B cell (primary cell): ENCODE measurements at regions of chr22 and their contacts with region 1.

Region 1: GRCh38 chr22:19447388-19448075 is at the start of gene C22orf39:
- DNase-seq: peak; percentile 94
- ATAC-seq: peak; percentile 87
- H3K4me3 ChIP-seq: peak within 1 kb of the TSS; percentile 65 to 82 (median 80)
- H3K4me3 Mint-ChIP-seq: peak within 1 kb of the TSS; percentile 99
- H3K27ac ChIP-seq: peak within 1 kb of the TSS; percentile 92 to 96
- H3K27ac Mint-ChIP-seq: peak within 1 kb of the TSS; percentile 98
- H3K4me1 ChIP-seq: peaks cover 16 to 27% of the 10 kb centered on the region in 2 donors
- H3K4me1 Mint-ChIP-seq: peaks cover 39% of the 10 kb centered on the region
- H3K27me3 ChIP-seq: no peaks in the 10 kb centered on the region
- H3K27me3 Mint-ChIP-seq: no peaks in the 10 kb centered on the region
- CTCF ChIP-seq: no peak
- total RNA-seq, gene C22orf39: 47.2 and 55.1 TPM in 2 replicates

Region 2: GRCh38 chr22:19122143-19122751 is 325.3 kb before region 1 on chr22 and contains the start of gene DGCR2:
- CTCF ChIA-PET with region 1: no interaction called
- POLR2A ChIA-PET with region 1: no interaction called
- intact Hi-C with region 1: loop called (anchors 5 kb)
- DNase-seq: peak; percentile 97
- ATAC-seq: peak; percentile 97
- H3K4me3 ChIP-seq: peak within 1 kb of the TSS; percentile 67 to 93 (median 83)
- H3K4me3 Mint-ChIP-seq: peak within 1 kb of the TSS; percentile 94
- H3K27ac ChIP-seq: peak within 1 kb of the TSS; percentile 63 to 76
- H3K27ac Mint-ChIP-seq: peak within 1 kb of the TSS; percentile 88
- H3K4me1 ChIP-seq: peaks cover 46 to 49% of the 10 kb centered on the region in 2 donors
- H3K4me1 Mint-ChIP-seq: peaks cover 45% of the 10 kb centered on the region
- H3K27me3 ChIP-seq: no peaks in the 10 kb centered on the region
- H3K27me3 Mint-ChIP-seq: no peaks in the 10 kb centered on the region
- CTCF ChIP-seq: no peak
- total RNA-seq, gene DGCR2: 49.5 and 50.4 TPM in 2 replicates

Region 3: GRCh38 chr22:19291580-19292457 is 155.7 kb before region 1 on chr22 and contains the start of gene CLTCL1:
- CTCF ChIA-PET with region 1: interaction called, 3 read pairs
- POLR2A ChIA-PET with region 1: interaction called, 6 read pairs
- intact Hi-C with region 1: loop called (anchors 1 kb)
- DNase-seq: peak; percentile 87
- ATAC-seq: peak; percentile 83
- H3K4me3 ChIP-seq: peak within 1 kb of the TSS; percentile 64 to 88 (median 84)
- H3K4me3 Mint-ChIP-seq: peak within 1 kb of the TSS; percentile 97
- H3K27ac ChIP-seq: peak within 1 kb of the TSS; percentile 75 to 77
- H3K27ac Mint-ChIP-seq: peak within 1 kb of the TSS; percentile 94
- H3K4me1 ChIP-seq: peaks cover 15 to 17% of the 10 kb centered on the region in 2 donors
- H3K4me1 Mint-ChIP-seq: peaks cover 24% of the 10 kb centered on the region
- H3K27me3 ChIP-seq: peaks cover 0 to 13% (median 3%) of the 10 kb centered on the region in 4 experiments
- H3K27me3 Mint-ChIP-seq: peaks cover 18% of the 10 kb centered on the region
- CTCF ChIP-seq: no peak
- total RNA-seq, gene CLTCL1: 5.2 and 5.5 TPM in 2 replicates

Region 4: GRCh38 chr22:19361501-19362103 is 85.9 kb before region 1 on chr22:
- CTCF ChIA-PET with region 1: no interaction called
- POLR2A ChIA-PET with region 1: interaction called, 3 read pairs
- intact Hi-C with region 1: loop called (anchors 1 kb)
- DNase-seq: peak; percentile 92
- ATAC-seq: peak; percentile 95
- H3K4me3 ChIP-seq: peak overlapping the region; percentile 1 to 65 (median 47)
- H3K4me3 Mint-ChIP-seq: peak overlapping the region; percentile 85
- H3K27ac ChIP-seq: peak overlapping the region; percentile 98 to 100
- H3K27ac Mint-ChIP-seq: peak overlapping the region; percentile 95
- H3K4me1 ChIP-seq: peaks cover 64 to 75% of the 10 kb centered on the region in 2 donors
- H3K4me1 Mint-ChIP-seq: peaks cover 69% of the 10 kb centered on the region
- H3K27me3 ChIP-seq: no peaks in the 10 kb centered on the region
- H3K27me3 Mint-ChIP-seq: no peaks in the 10 kb centered on the region
- CTCF ChIP-seq: no peak

Region 5: GRCh38 chr22:19432133-19432851 is 15.2 kb before region 1 on chr22 and contains the start of gene MRPL40:
- CTCF ChIA-PET with region 1: interaction called, 4 read pairs
- POLR2A ChIA-PET with region 1: interaction called, 29 read pairs
- intact Hi-C with region 1: loop called (anchors 1 kb)
- DNase-seq: peak; percentile 90
- ATAC-seq: peak; percentile 87
- H3K4me3 ChIP-seq: peak within 1 kb of the TSS; percentile 73 to 90 (median 85)
- H3K4me3 Mint-ChIP-seq: peak within 1 kb of the TSS; percentile 93
- H3K27ac ChIP-seq: peak within 1 kb of the TSS; percentile 91 to 97
- H3K27ac Mint-ChIP-seq: peak within 1 kb of the TSS; percentile 98
- H3K4me1 ChIP-seq: peaks cover 46 to 63% of the 10 kb centered on the region in 2 donors
- H3K4me1 Mint-ChIP-seq: peaks cover 62% of the 10 kb centered on the region
- H3K27me3 ChIP-seq: no peaks in the 10 kb centered on the region
- H3K27me3 Mint-ChIP-seq: no peaks in the 10 kb centered on the region
- CTCF ChIP-seq: no peak
- total RNA-seq, gene MRPL40: 18.0 and 21.9 TPM in 2 replicates

Region 6: DNA sequence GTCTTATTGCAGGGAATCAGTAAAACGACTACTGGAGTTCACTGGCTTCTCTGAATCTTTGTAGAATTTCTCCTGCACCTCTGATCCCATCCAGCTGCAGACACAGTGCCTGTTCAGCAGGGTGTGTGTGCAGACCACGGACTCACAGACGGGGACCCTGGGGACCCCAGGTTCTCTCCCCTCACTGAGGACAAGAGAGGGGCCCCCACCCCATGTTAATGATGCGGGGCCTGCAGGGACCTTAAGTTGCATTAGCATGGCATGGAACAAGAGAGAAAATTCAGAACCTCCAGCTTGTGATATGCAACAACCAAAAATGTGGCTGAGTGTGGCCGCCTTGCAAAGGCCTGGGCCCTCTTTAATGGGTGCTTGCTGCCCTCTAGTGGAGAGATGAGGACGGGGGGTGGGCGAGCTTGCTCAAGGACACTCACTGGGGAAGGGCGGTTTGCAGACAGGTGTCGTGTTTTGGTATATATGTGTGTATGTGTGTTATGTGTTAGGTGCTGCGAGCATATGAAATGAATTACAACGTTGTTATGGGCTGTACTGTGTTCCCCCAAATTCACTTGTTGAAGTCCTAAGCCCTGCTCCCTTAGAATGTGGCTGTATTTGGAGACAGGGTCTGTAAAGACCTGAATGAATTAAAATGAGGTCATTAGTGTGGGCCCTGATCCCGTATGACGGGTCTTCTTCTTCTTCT is 182.3 kb after region 1 on chr22:
- CTCF ChIA-PET with region 1: no interaction called
- POLR2A ChIA-PET with region 1: interaction called, 4 read pairs
- intact Hi-C with region 1: loop called (anchors 5 kb)
- DNase-seq: peak; percentile 86
- ATAC-seq: peak; percentile 95
- H3K4me3 ChIP-seq: no peak overlapping the region
- H3K4me3 Mint-ChIP-seq: no peak overlapping the region
- H3K27ac ChIP-seq: no peak overlapping the region
- H3K27ac Mint-ChIP-seq: no peak overlapping the region
- H3K4me1 ChIP-seq: no peaks in the 10 kb centered on the region
- H3K4me1 Mint-ChIP-seq: no peaks in the 10 kb centered on the region
- H3K27me3 ChIP-seq: peaks cover 0 to 24% (median 4%) of the 10 kb centered on the region in 4 experiments
- H3K27me3 Mint-ChIP-seq: peaks cover 40% of the 10 kb centered on the region
- CTCF ChIP-seq: peak; percentile 96